ENCODE measurements at regions of chr7 and their contacts with region 1.

Region 1: DNA sequence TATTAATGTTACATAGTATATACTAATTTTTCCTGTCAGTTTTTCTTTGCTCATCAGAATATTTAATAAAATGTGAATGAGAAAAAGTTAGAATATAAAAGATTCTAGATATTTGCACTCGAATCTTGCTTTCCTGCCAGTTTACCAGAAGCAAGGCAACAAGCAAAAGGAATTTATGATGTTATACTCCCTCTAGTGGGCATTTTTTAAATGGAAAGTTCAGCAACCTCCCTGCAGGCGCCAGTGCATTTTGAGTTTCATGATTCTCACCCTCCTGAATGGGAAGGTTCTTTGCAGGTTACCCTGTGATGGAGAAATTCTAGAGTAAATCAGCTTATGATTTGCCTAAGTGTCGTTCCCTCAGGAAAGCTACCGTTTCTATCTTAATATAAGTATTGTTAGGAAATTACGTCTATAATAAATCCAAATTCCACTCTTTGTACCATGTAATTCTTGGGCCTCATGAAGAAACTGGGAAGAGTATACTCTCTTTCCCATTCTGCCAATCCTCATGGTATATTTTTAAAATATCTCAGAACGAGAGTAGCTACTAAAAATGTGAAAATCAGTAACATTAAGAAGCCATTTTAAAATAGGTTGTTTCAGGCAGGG is 350.0 kb downstream of the CRPPA start:
- DNase-seq: no peak
- H3K4me3 ChIP-seq: no peak overlapping the region
- H3K27ac ChIP-seq: no peak overlapping the region
- H3K4me1 ChIP-seq: peaks cover 0 to 20% (median 9%) of the 10 kb centered on the region in 4 donors
- H3K27me3 ChIP-seq: no peaks in the 10 kb centered on the region
- CTCF ChIP-seq: peak; percentile 69 to 94 (median 85)
- EP300 ChIP-seq: no peak
- POLR2A ChIP-seq: no peak

Region 2: GRCh38 chr7:15015545-15016326 is 1055.6 kb before region 1 on chr7:
- intact Hi-C with region 1: loop called (anchors 10 kb)
- DNase-seq: no peak
- H3K4me3 ChIP-seq: peak overlapping the region in 2 of 4 donors; percentile 5 to 6
- H3K27ac ChIP-seq: peak overlapping the region in 2 of 4 donors; percentile 30 to 33
- H3K4me1 ChIP-seq: peaks cover 0 to 18% (median 14%) of the 10 kb centered on the region in 4 donors
- H3K27me3 ChIP-seq: no peaks in the 10 kb centered on the region
- CTCF ChIP-seq: peak; percentile 25 to 75 (median 58)
- EP300 ChIP-seq: no peak
- POLR2A ChIP-seq: no peak

Region 3: GRCh38 chr7:15305002-15305600 is 766.3 kb before region 1 on chr7:
- intact Hi-C with region 1: loop called (anchors 5 kb)
- DNase-seq: peak; percentile 72
- H3K4me3 ChIP-seq: no peak overlapping the region
- H3K27ac ChIP-seq: no peak overlapping the region
- H3K4me1 ChIP-seq: no peaks in the 10 kb centered on the region
- H3K27me3 ChIP-seq: no peaks in the 10 kb centered on the region
- CTCF ChIP-seq: peak; percentile 34 to 73 (median 60)
- EP300 ChIP-seq: no peak
- POLR2A ChIP-seq: no peak

Region 4: DNA sequence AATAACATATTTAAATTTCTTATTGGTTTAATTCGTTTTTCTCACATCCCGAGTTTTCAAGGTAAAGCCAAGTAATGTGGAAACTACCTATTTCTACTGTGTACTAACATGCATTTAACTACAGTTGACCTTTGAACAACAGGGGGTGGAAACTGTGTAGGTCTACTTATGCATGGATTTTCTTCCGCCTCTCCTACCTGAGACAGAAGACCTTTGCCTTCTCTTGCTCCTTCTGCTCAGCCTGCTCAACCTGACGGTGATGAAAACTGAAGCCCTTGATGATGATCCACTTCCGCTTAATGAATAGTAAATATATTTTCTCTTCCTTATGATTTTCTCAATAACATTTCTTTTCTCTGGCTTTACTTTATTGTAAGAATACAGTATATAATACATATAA is 403.4 kb before region 1 on chr7:
- intact Hi-C with region 1: no loop called
- DNase-seq: no peak
- H3K4me3 ChIP-seq: no peak overlapping the region
- H3K27ac ChIP-seq: no peak overlapping the region
- H3K4me1 ChIP-seq: no peaks in the 10 kb centered on the region
- H3K27me3 ChIP-seq: no peaks in the 10 kb centered on the region
- CTCF ChIP-seq: no peak
- EP300 ChIP-seq: no peak
- POLR2A ChIP-seq: no peak

Region 5: GRCh38 chr7:15720849-15721471 is 350.4 kb before region 1 on chr7:
- intact Hi-C with region 1: loop called (anchors 10 kb)
- DNase-seq: peak; percentile 66
- H3K4me3 ChIP-seq: no peak overlapping the region
- H3K27ac ChIP-seq: no peak overlapping the region
- H3K4me1 ChIP-seq: no peaks in the 10 kb centered on the region
- H3K27me3 ChIP-seq: no peaks in the 10 kb centered on the region
- CTCF ChIP-seq: peak; percentile 25 to 72 (median 52)
- EP300 ChIP-seq: no peak
- POLR2A ChIP-seq: no peak

Region 6: DNA sequence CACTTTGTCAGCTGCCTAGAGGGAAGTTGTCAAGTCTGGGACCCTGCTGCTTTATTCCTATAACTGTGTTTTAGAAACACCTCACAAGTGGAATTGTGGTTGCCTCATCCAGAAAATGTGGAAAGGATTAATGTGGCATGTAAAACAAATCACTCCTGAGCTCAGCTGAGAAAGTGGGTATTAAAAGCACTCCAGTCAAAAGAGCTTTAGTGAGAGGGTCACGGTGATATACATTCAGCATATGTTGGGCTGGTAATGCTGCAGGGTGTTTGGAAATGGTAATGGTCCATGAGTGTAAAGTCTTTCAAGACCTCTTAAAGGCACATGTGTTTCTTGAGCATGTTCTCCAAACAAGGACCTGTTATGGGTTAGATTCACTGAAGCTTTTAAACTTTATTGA is 66.7 kb before region 1 on chr7:
- intact Hi-C with region 1: no loop called
- DNase-seq: no peak
- H3K4me3 ChIP-seq: no peak overlapping the region
- H3K27ac ChIP-seq: no peak overlapping the region
- H3K4me1 ChIP-seq: no peaks in the 10 kb centered on the region
- H3K27me3 ChIP-seq: no peaks in the 10 kb centered on the region
- CTCF ChIP-seq: no peak
- EP300 ChIP-seq: no peak
- POLR2A ChIP-seq: no peak